Ovary (tissue), 10 donors: ENCODE measurements at regions of chr1 and their contacts with region 1.

Region 1: GRCh38 chr1:165586435-165586834 is 42.6 kb downstream of the LRRC52 start:
- DNase-seq: no peak
- H3K4me3 ChIP-seq: no peak overlapping the region
- H3K27ac ChIP-seq: no peak overlapping the region
- H3K4me1 ChIP-seq: no peaks in the 10 kb centered on the region
- H3K27me3 ChIP-seq: no peaks in the 10 kb centered on the region
- CTCF ChIP-seq: no peak
- EP300 ChIP-seq: no peak
- POLR2A ChIP-seq: no peak

Region 2: DNA sequence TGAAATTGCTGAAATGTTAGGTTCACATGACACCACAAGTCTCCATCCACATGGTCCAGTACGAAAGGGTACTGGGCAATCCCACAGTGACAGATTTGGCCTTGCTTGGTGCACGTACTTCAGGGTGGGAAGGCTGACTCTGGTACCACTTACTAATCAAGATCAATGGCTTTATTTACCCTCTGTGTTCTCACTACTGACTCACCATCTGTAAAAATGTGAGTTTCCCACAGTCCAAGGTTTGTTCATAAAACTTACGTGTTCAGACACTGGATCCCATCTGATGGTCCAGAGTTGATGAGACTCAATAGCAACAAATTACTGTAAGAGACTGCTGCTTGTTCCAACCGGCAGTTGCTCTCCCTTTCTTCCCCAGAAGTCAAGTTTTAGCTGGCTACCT is 461.7 kb before region 1 on chr1:
- intact Hi-C with region 1: loop called in 1 of 4 experiments (anchors 5 kb)
- DNase-seq: no peak
- H3K4me3 ChIP-seq: no peak overlapping the region
- H3K27ac ChIP-seq: no peak overlapping the region
- H3K4me1 ChIP-seq: no peaks in the 10 kb centered on the region
- H3K27me3 ChIP-seq: no peaks in the 10 kb centered on the region
- CTCF ChIP-seq: no peak
- EP300 ChIP-seq: no peak
- POLR2A ChIP-seq: no peak

Region 3: DNA sequence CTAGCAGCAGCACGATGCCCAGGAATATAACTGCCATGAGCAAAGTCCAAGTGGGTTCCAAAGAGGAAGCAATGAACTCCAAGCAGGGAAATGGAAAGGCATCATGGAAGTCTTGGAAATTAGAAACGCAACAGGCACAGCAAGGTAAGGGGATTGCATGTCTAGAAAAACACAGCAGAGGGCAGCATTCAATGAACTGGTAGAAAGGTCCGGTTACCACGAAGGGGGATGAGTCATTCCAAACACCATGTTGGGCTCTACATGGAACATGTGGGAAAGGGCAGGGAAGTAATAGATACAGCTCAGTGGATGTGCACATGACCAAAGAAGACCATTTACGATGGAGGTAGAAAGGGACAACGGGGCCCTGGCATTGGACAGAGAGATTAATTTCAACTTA is 177.9 kb before region 1 on chr1:
- intact Hi-C with region 1: loop called in 1 of 4 experiments (anchors 5 kb)
- DNase-seq: no peak
- H3K4me3 ChIP-seq: no peak overlapping the region
- H3K27ac ChIP-seq: no peak overlapping the region
- H3K4me1 ChIP-seq: no peaks in the 10 kb centered on the region
- H3K27me3 ChIP-seq: no peaks in the 10 kb centered on the region
- CTCF ChIP-seq: no peak
- EP300 ChIP-seq: no peak
- POLR2A ChIP-seq: no peak

Region 4: GRCh38 chr1:165501970-165502348 is 84.5 kb before region 1 on chr1:
- intact Hi-C with region 1: no loop called
- DNase-seq: no peak
- H3K4me3 ChIP-seq: no peak overlapping the region
- H3K27ac ChIP-seq: no peak overlapping the region
- H3K4me1 ChIP-seq: no peaks in the 10 kb centered on the region
- H3K27me3 ChIP-seq: no peaks in the 10 kb centered on the region
- CTCF ChIP-seq: no peak
- EP300 ChIP-seq: no peak
- POLR2A ChIP-seq: no peak